ENCODE measurements at regions of chr11 and their contacts with region 1.

Region 1: DNA sequence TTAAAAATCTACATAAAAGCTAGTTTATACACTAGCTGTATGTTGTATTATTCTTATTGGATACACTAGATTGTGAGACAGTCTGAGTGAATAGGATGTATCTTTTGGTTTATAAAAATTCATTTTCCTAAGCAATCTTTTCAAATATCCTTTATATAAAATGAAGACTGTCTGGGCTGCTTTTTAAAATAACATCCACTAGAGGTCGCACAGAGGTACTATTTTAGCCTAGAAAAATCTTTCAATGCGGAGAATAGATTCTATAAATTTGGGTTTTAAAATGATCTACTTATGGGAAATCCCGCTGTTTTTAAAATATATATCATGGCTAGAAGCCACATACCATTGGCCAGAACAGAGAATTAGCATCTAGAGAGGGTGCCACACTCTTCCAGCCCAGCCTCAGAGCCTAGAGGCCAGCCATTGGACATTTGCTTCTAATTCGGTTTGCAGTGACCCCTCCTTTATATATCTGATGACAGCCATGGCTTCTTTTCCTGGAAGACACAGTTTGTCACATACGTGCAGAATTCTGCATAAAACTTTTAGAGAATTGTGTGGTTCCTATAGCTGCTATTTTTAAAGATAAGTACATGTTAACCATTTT is 7.3 kb downstream of the C11orf97 start:
- DNase-seq: no peak
- H3K4me3 ChIP-seq: no peak overlapping the region
- H3K27ac ChIP-seq: no peak overlapping the region
- H3K4me1 ChIP-seq: no peaks in the 10 kb centered on the region
- H3K27me3 ChIP-seq: no peaks in the 10 kb centered on the region
- CTCF ChIP-seq: peak; percentile 51

Region 2: DNA sequence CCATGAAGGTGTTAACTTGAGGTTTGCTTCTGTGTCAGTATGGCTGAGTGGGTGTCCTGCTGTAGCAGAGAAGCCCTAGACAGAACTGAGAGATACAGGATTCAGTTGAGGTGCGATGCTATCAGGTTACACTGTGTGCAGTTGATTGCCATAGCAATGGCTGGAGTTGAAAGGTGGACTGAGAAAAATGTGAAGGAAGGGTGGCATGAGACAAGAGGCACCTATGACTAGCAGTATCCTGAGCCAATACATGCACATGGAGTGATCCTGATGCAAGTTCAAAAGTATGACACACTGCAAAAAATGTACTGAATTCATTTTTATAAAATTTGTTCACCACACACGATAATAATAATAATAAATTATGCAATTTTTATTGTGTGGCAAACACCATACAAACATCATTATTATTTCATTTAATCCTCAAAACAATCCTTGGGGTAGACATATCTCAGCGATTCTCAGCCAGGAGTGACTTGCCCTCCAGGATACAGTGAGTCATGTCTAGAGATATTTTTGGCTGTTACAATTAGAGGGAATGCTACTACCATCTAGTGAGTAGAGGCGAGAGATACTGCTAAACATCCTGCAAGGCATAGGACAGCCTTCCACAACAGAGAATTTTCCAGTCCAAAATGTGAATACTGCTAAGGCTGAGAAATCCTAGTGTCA is 43.7 kb after region 1 on chr11:
- intact Hi-C with region 1: loop called (anchors 5 kb)
- DNase-seq: no peak
- H3K4me3 ChIP-seq: no peak overlapping the region
- H3K27ac ChIP-seq: no peak overlapping the region
- H3K4me1 ChIP-seq: no peaks in the 10 kb centered on the region
- H3K27me3 ChIP-seq: no peaks in the 10 kb centered on the region
- CTCF ChIP-seq: no peak

Region 3: DNA sequence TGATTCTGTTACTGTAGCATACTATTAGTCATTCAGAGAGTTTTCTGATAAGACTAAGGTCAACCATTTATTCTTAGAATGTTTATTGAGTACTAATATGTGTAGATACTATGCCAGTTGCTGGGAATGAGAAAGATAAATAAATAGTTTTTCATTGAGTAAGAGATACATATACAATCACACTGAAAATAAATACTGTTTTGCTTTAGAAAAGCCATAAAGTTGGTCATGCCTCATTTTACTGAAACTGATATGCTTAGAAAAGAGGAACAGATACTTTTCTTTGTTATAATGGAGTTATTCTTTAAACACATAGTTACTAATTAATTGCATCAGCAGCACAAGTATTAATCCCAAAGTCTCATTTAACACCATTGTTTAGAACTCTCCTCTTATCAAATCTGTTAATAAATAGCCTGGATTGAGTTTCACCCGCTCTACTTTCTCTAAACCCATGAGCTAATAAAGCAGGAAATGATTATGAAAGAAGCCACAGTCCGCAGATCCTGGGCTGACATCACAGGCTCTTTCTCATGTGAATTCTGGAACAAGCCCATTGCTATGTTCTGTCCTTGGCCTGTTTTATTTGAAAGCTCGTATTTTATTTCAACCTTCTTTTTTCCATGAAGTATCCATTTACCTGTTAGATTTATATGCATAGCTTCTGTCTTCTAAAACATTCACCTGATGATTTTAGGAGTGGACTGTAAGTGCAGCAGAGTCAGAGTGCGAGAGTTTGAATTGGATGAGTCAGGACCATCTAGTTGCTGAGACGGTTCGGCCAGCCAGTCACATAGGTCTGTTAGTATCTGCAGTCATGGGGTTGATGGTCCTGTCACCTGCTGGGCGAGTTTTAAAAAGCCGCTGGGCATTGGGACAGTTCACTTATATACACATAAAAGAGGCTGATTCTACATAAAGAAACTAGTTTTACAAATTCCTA is 83.1 kb after region 1 on chr11:
- intact Hi-C with region 1: loop called (anchors 2 kb)
- DNase-seq: no peak
- H3K4me3 ChIP-seq: no peak overlapping the region
- H3K27ac ChIP-seq: no peak overlapping the region
- H3K4me1 ChIP-seq: no peaks in the 10 kb centered on the region
- H3K27me3 ChIP-seq: no peaks in the 10 kb centered on the region
- CTCF ChIP-seq: peak; percentile 67

Region 4: DNA sequence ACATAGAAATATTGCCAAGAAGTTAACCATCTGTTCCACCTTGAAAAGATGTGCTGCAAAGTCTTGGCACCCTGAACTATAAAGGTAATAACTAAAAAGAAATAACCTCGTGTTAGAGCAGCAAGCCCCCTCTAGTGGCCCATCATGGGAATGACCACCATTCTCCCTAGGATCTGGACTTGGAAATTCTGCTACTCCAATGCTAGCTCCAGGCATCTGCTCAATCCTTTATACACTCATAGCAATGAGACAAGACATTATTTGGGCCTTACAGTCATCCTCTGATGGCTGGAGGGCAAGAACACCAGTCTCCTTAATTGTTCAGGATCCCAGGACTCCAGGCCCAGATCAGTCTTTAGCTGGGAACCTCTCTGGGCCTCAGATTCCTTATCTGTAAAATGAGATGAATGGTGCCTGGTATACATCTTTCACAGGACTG is 377.8 kb after region 1 on chr11:
- intact Hi-C with region 1: loop called (anchors 10 kb)
- DNase-seq: peak; percentile 42
- H3K4me3 ChIP-seq: no peak overlapping the region
- H3K27ac ChIP-seq: no peak overlapping the region
- H3K4me1 ChIP-seq: no peaks in the 10 kb centered on the region
- H3K27me3 ChIP-seq: no peaks in the 10 kb centered on the region
- CTCF ChIP-seq: peak; percentile 88

Measured in colonic mucosa (tissue), 4 donors.